ENCODE measurements at regions of chr16 and their contacts with region 1.

Region 1: GRCh38 chr16:85821441-85822135 is 22.1 kb downstream of the COX4I1 start:
- DNase-seq: peak; percentile 86
- H3K4me3 Mint-ChIP-seq: no peak overlapping the region
- H3K27ac Mint-ChIP-seq: no peak overlapping the region
- H3K4me1 Mint-ChIP-seq: peaks cover 5% of the 10 kb centered on the region
- H3K27me3 Mint-ChIP-seq: peaks cover 4% of the 10 kb centered on the region

Region 2: GRCh38 chr16:85898521-85899442 is 77.2 kb after region 1 on chr16 and contains the start of gene IRF8:
- CTCF ChIA-PET with region 1: interaction called, 48 read pairs
- POLR2A ChIA-PET with region 1: no interaction called
- intact Hi-C with region 1: loop called (anchors 2 kb)
- DNase-seq: peak; percentile 80
- H3K4me3 Mint-ChIP-seq: peak within 1 kb of the TSS; percentile 82
- H3K27ac Mint-ChIP-seq: peak within 1 kb of the TSS; percentile 76
- H3K4me1 Mint-ChIP-seq: peaks cover 40% of the 10 kb centered on the region
- H3K27me3 Mint-ChIP-seq: peaks cover 28% of the 10 kb centered on the region
- total RNA-seq, gene IRF8: 41.7 to 43.1 TPM

Region 3: DNA sequence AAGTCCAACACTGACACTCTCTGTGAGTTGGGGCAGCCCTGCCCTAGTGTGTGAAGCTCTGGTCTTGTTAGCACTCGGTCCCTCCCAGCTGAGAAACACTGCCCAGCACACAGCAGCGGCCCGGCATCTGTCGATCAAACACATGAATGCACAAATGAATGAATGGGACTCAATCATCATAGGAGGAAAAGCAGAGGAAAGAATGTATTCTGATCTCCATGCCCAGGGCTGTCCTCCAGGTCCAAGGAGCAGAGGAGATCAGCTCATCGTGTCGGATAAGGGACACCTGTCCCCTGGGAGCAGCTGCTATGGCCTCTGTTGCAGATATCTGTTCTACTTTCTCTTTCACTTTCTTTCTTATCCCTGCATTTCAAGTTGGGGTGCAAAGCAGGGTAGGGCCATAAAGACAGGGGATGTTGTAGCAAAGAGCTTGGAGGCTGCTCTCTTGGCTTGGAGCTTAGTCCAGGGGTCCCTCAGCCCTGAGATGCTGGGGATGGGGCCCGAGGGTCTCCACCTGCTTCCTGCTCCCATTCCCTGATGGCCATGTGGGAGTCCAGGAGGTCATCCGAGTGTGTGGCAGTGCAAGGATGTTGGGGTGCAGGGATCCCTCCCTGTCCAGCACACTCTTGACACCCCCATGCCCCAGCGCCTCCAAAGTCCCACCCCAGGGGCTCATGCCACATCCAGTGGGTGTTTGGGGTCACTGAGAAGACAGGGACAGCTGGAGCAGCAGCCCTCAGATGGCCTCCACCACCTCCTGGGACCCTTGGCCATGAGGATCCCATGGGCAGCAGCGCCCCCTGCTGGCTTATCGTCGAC is 165.6 kb after region 1 on chr16:
- CTCF ChIA-PET with region 1: interaction called, 281 read pairs
- POLR2A ChIA-PET with region 1: interaction called, 11 read pairs
- intact Hi-C with region 1: loop called (anchors 1 kb)
- DNase-seq: peak; percentile 50
- H3K4me3 Mint-ChIP-seq: no peak overlapping the region
- H3K27ac Mint-ChIP-seq: no peak overlapping the region
- H3K4me1 Mint-ChIP-seq: peaks cover 60% of the 10 kb centered on the region
- H3K27me3 Mint-ChIP-seq: peaks cover 12% of the 10 kb centered on the region

Region 4: GRCh38 chr16:86010680-86011141 is 189.1 kb after region 1 on chr16:
- CTCF ChIA-PET with region 1: interaction called, 190 read pairs
- POLR2A ChIA-PET with region 1: no interaction called
- intact Hi-C with region 1: no loop called
- DNase-seq: no peak
- H3K4me3 Mint-ChIP-seq: no peak overlapping the region
- H3K27ac Mint-ChIP-seq: no peak overlapping the region
- H3K4me1 Mint-ChIP-seq: peaks cover 16% of the 10 kb centered on the region
- H3K27me3 Mint-ChIP-seq: peaks cover 2% of the 10 kb centered on the region

Region 5: GRCh38 chr16:86044241-86044671 is 222.7 kb after region 1 on chr16:
- CTCF ChIA-PET with region 1: interaction called, 10 read pairs
- POLR2A ChIA-PET with region 1: no interaction called
- intact Hi-C with region 1: no loop called
- DNase-seq: peak; percentile 59
- H3K4me3 Mint-ChIP-seq: no peak overlapping the region
- H3K27ac Mint-ChIP-seq: no peak overlapping the region
- H3K4me1 Mint-ChIP-seq: peaks cover 14% of the 10 kb centered on the region
- H3K27me3 Mint-ChIP-seq: peaks cover 28% of the 10 kb centered on the region

Region 6: DNA sequence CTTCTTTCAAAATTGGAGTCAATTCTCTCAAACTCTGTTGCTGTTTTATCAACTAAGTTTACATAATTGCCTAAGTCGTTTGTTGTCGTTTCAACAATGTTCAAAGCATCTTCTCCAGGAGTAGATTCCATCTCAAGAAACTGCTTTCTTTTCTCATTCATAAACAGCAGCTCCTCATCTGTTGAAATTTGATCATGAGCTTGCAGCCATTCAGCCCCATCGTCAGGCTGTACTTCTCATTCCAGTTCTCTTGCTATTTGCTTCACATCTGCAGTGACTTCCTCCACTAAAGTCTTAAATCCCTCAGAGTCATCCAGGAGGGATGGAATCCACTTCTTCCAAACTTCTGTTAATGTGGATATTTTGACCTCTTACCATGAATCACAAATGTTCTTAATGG is 308.0 kb after region 1 on chr16:
- CTCF ChIA-PET with region 1: no interaction called
- POLR2A ChIA-PET with region 1: no interaction called
- intact Hi-C with region 1: no loop called
- DNase-seq: no peak
- H3K4me3 Mint-ChIP-seq: no peak overlapping the region
- H3K27ac Mint-ChIP-seq: no peak overlapping the region
- H3K4me1 Mint-ChIP-seq: no peaks in the 10 kb centered on the region
- H3K27me3 Mint-ChIP-seq: peaks cover 5% of the 10 kb centered on the region